HCT116 (cell line): ENCODE measurements at regions of chr12 and their contacts with region 1.

Region 1: DNA sequence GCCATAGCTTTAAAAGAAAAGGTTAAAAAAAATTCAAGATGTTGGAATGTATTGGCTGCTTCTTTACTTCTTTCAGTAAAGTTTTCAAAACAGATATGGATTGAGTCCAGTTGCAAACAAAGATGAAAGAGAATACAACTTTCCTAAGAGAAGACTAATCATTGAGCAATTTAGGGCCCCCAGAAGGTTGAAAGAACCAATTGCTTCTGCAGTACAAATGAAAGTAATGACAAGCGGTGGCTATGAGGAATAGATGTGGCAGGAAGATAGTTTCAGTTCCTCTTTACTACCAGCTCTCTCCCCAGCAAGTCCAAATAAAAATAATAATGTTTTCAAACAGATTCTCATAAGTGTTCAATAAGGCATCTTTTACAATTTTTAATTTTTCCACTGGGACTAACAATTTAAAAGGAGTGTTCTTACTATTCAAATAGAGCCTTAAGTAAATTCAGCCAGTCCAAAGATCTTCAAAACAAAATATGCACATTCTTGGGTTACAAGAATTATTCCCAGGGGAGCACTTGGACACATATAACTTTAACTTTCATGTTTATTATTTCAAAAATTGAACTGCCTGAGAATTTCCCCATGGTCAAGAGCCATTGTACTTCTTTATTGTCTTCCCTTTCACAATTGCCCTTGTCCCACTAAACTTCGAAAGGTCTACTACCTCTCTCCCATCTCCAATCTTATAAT is 62.3 kb upstream of the PPP1R12A start:
- DNase-seq: no peak
- ATAC-seq: no peak
- H3K4me3 ChIP-seq: no peak overlapping the region
- H3K27ac ChIP-seq: no peak overlapping the region
- H3K4me1 ChIP-seq: peaks cover 0 to 7% of the 10 kb centered on the region in 2 experiments; a peak in 2 of 4 replicates
- H3K27me3 ChIP-seq: no peaks in the 10 kb centered on the region
- CTCF ChIP-seq: no peak
- POLR2A ChIP-seq: no peak
- RAD21 ChIP-seq: no peak

Region 2: GRCh38 chr12:80226576-80226975 is 229.3 kb after region 1 on chr12:
- CTCF ChIA-PET with region 1: no interaction called
- POLR2A ChIA-PET with region 1: no interaction called
- RAD21 ChIA-PET with region 1: no interaction called
- intact Hi-C with region 1: no loop called
- DNase-seq: no peak
- ATAC-seq: no peak
- H3K4me3 ChIP-seq: no peak overlapping the region
- H3K27ac ChIP-seq: no peak overlapping the region
- H3K4me1 ChIP-seq: no peaks in the 10 kb centered on the region
- H3K27me3 ChIP-seq: no peaks in the 10 kb centered on the region
- CTCF ChIP-seq: no peak
- POLR2A ChIP-seq: no peak
- RAD21 ChIP-seq: no peak

Region 3: GRCh38 chr12:80659512-80660063 is 662.3 kb after region 1 on chr12:
- CTCF ChIA-PET with region 1: no interaction called
- POLR2A ChIA-PET with region 1: no interaction called
- RAD21 ChIA-PET with region 1: no interaction called
- intact Hi-C with region 1: loop called (anchors 5 kb)
- DNase-seq: no peak
- ATAC-seq: no peak
- H3K4me3 ChIP-seq: no peak overlapping the region
- H3K27ac ChIP-seq: no peak overlapping the region
- H3K4me1 ChIP-seq: no peaks in the 10 kb centered on the region
- H3K27me3 ChIP-seq: no peaks in the 10 kb centered on the region
- CTCF ChIP-seq: no peak
- POLR2A ChIP-seq: no peak
- RAD21 ChIP-seq: no peak